Lower lobe of right lung (tissue), 2 donors: ENCODE measurements at regions of chr20 and their contacts with region 1.

Region 1: GRCh38 chr20:42018951-42019350 is 400.8 kb upstream of the CHD6 start:
- DNase-seq: no peak
- ATAC-seq: no peak
- H3K4me3 ChIP-seq: no peak overlapping the region
- H3K27ac ChIP-seq: no peak overlapping the region
- H3K4me1 ChIP-seq: no peaks in the 10 kb centered on the region
- H3K27me3 ChIP-seq: no peaks in the 10 kb centered on the region
- CTCF ChIP-seq: no peak

Region 2: DNA sequence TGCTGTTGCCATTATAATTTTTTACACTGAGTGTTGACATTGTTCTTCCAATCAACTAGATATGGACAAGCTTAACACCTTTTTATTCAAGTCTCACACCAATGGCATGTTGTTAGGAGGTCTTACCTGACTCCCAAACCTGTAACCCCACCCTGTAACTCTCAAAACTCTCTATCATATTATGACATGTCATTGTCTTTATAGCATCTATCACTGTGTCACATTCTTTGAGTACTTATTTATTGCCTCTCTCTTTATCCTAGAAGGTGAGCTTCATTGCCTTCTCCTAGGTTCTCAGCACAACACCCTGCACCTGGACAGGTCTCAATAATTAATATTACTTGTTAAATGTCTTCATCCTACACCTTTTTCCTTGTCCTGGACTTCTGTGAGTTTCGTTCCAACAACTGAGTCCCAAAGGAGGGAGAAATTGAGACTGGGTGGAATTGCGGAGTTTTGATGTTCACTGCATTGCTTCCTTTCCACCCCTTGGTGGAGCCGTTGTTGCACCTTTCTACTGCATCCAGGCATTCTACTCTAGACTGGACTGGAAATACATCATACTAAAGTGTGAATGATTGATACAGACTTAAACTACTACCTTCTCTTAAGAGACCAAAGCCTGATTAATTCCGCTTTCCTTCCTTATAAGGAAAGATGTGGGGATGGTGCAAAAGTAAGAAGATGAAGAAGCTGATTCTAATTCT is 62.8 kb before region 1 on chr20:
- intact Hi-C with region 1: loop called (anchors 10 kb)
- DNase-seq: no peak
- ATAC-seq: no peak
- H3K4me3 ChIP-seq: no peak overlapping the region
- H3K27ac ChIP-seq: no peak overlapping the region
- H3K4me1 ChIP-seq: no peaks in the 10 kb centered on the region
- H3K27me3 ChIP-seq: peaks cover 3% of the 10 kb centered on the region
- CTCF ChIP-seq: peak; percentile 36

Region 3: DNA sequence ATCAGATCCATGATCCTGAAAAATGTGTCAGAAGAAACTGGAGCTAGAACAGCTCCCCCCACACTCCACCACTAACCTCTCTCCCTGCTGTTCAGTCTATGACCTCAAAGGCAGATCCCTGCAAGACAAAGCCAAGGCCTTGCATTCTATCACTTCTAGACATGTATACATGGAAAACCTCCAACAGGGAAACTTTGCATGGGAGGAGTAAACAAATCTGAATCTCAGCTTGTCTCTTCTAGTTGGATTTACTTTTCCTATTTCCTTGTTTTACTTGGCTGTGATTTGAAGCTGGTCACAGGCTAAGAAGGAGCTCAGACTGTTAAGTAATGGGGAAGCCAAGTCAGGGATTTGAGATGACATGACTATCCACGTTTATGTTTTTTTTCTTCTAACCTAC is 56.0 kb after region 1 on chr20:
- intact Hi-C with region 1: no loop called
- DNase-seq: no peak
- ATAC-seq: peak in 1 of 2 donors; percentile 57
- H3K4me3 ChIP-seq: no peak overlapping the region
- H3K27ac ChIP-seq: no peak overlapping the region
- H3K4me1 ChIP-seq: no peaks in the 10 kb centered on the region
- H3K27me3 ChIP-seq: no peaks in the 10 kb centered on the region
- CTCF ChIP-seq: no peak